Caco-2 (cell line): ENCODE measurements at regions of chr5 and their contacts with region 1.

Region 1: GRCh38 chr5:32475334-32476097 is 31.0 kb upstream of the ZFR start:
- DNase-seq: no peak
- H3K4me3 ChIP-seq: no peak overlapping the region
- H3K4me3 Mint-ChIP-seq: no peak overlapping the region
- H3K27ac Mint-ChIP-seq: peak overlapping the region; percentile 94
- H3K4me1 ChIP-seq: peaks cover 35% of the 10 kb centered on the region
- H3K4me1 Mint-ChIP-seq: peaks cover 51% of the 10 kb centered on the region
- H3K27me3 ChIP-seq: no peaks in the 10 kb centered on the region
- H3K27me3 Mint-ChIP-seq: no peaks in the 10 kb centered on the region
- CTCF ChIP-seq: no peak

Region 2: DNA sequence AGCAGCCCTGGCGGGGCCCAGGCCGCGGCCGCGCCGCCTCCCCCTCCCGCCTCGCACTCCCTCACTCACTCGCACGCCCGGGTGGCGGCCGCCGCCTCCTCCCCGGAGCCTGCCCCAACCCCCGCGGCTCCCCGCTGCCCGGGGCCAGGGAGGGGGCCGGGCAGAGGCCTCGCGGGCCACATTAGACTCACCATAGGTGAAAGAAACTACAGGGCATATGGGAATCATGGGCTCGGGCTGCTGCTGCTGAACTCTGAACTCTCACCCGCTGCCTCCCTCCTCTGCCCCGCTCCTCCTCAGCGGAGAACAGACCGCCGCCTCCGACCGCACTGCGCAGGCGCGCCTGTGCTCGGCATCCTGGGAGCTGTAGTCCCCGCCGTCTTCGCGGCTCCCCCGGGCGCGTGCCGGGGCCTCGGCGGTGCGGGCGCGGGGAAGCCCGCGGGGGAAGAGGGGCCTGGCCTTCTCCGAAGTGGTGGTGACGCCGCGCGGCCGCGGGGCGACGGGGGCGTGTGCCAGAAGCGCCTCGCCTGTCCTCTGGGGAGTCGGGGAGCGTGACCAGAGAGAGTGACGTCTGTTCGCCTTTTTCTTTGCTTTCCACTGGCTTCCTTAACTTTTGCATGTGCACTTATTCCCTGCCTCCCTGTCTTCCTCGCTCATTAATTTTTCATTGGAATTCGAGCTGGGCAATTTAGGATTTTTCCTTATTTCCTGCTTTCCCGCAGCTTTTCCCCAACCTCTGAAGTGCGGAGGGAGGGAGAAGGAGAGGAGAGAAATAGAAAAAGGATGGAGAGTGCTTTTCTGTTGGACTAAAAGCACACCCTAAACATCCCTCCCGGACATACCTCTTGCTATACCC is 30.9 kb before region 1 on chr5 and contains the start of gene ZFR:
- CTCF ChIA-PET with region 1: interaction called, 3 read pairs
- POLR2A ChIA-PET with region 1: interaction called, 6 read pairs
- intact Hi-C with region 1: loop called (anchors 1 kb)
- DNase-seq: peak; percentile 95
- H3K4me3 ChIP-seq: peak within 1 kb of the TSS; percentile 98
- H3K4me3 Mint-ChIP-seq: peak within 1 kb of the TSS; percentile 82
- H3K27ac Mint-ChIP-seq: peak within 1 kb of the TSS; percentile 39
- H3K4me1 ChIP-seq: peaks cover 12% of the 10 kb centered on the region
- H3K4me1 Mint-ChIP-seq: peaks cover 18% of the 10 kb centered on the region
- H3K27me3 ChIP-seq: no peaks in the 10 kb centered on the region
- H3K27me3 Mint-ChIP-seq: no peaks in the 10 kb centered on the region
- CTCF ChIP-seq: no peak
- total RNA-seq, gene ZFR: 75.1 and 78.3 TPM in 2 replicates

Region 3: DNA sequence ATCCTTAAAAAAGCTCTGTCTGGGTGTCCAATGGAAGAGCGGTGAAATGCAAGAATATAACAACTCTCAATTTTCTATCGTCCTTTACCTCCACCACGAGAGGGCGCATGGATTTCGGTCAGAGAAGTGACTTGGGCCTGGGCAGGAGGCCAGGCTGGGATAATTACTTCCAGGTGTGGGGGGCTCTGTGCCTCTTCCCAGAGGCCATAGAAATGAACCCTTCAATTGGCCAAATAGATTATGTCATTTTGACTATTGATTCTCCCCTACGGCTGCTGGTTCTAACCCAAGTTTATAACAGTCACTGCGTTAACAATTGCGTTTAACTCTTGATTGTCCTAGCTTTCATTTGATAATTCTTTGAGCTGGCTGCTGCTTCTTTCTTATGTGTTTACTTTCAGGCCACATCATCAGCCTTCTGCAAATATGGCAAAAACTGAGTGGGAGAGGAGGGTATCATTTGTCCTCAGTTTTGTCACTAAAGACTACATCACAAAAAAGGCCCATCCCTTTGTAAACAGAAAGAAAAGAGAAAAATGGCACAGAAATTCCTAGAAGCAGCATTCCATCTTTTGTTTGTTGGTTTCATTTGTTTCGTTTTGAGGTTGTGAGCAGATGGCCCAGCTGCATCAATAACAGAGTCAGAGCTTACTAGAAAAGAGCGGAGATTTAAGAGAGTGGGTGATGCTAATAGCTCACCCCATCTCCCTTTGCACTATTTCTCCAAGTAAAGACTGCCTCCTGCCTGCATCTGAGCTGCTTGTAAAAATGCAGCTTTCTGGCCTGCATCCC is 14.5 kb after region 1 on chr5:
- CTCF ChIA-PET with region 1: interaction called, 26 read pairs
- POLR2A ChIA-PET with region 1: no interaction called
- intact Hi-C with region 1: loop called (anchors 2 kb)
- DNase-seq: peak; percentile 72 to 78
- H3K4me3 ChIP-seq: no peak overlapping the region
- H3K4me3 Mint-ChIP-seq: no peak overlapping the region
- H3K27ac Mint-ChIP-seq: peak overlapping the region; percentile 76
- H3K4me1 ChIP-seq: peaks cover 11% of the 10 kb centered on the region
- H3K4me1 Mint-ChIP-seq: peaks cover 19% of the 10 kb centered on the region
- H3K27me3 ChIP-seq: no peaks in the 10 kb centered on the region
- H3K27me3 Mint-ChIP-seq: no peaks in the 10 kb centered on the region
- CTCF ChIP-seq: peak; percentile 75 to 87

Region 4: DNA sequence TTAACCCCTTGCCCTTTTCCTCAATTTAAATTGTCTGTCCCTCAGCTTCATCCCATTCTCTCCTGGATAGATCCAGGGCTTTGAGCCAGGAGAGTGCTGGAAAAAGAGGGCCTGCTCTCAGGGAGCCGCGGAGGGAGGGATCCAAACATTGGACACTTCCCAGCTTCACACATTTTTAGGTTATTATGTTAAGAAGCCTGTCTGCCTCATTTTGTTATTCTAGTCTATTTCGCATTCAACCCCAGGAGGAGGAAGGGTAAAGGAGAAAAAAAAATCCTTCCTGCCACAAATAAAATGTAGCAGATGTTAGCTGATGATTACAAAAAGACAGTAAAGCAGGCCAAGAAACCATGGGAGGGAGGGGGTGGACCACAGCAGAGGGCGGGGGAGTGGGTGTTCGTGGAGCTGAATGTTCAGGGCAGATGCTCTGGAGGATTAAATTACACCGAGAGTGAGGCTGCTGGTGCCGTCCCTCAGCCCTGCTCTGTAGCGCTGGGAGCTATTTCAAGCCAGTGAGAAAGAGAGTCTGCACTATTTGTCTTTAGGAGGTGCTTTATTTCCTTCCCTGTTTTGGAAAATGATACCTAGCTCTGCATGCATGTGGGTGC is 29.6 kb after region 1 on chr5:
- CTCF ChIA-PET with region 1: no interaction called
- POLR2A ChIA-PET with region 1: no interaction called
- intact Hi-C with region 1: no loop called
- DNase-seq: no peak
- H3K4me3 ChIP-seq: no peak overlapping the region
- H3K4me3 Mint-ChIP-seq: no peak overlapping the region
- H3K27ac Mint-ChIP-seq: no peak overlapping the region
- H3K4me1 ChIP-seq: peaks cover 6% of the 10 kb centered on the region
- H3K4me1 Mint-ChIP-seq: peaks cover 19% of the 10 kb centered on the region
- H3K27me3 ChIP-seq: no peaks in the 10 kb centered on the region
- H3K27me3 Mint-ChIP-seq: no peaks in the 10 kb centered on the region
- CTCF ChIP-seq: no peak